WTC11 (cell line): ENCODE measurements at regions of chr6 and their contacts with region 1.

Region 1: GRCh38 chr6:35342258-35343091 is at the start of gene PPARD:
- DNase-seq: peak; percentile 99
- ATAC-seq: peak; percentile 97
- H3K4me3 Mint-ChIP-seq: peak within 1 kb of the TSS; percentile 86
- H3K27ac Mint-ChIP-seq: peak within 1 kb of the TSS; percentile 87
- H3K4me1 Mint-ChIP-seq: peaks cover 20% of the 10 kb centered on the region
- H3K27me3 Mint-ChIP-seq: peaks cover 8% of the 10 kb centered on the region
- CTCF ChIP-seq: peak; percentile 93
- total RNA-seq, gene PPARD: 14.7 to 17.1 TPM (median 16.8 TPM) in 3 replicates

Region 2: DNA sequence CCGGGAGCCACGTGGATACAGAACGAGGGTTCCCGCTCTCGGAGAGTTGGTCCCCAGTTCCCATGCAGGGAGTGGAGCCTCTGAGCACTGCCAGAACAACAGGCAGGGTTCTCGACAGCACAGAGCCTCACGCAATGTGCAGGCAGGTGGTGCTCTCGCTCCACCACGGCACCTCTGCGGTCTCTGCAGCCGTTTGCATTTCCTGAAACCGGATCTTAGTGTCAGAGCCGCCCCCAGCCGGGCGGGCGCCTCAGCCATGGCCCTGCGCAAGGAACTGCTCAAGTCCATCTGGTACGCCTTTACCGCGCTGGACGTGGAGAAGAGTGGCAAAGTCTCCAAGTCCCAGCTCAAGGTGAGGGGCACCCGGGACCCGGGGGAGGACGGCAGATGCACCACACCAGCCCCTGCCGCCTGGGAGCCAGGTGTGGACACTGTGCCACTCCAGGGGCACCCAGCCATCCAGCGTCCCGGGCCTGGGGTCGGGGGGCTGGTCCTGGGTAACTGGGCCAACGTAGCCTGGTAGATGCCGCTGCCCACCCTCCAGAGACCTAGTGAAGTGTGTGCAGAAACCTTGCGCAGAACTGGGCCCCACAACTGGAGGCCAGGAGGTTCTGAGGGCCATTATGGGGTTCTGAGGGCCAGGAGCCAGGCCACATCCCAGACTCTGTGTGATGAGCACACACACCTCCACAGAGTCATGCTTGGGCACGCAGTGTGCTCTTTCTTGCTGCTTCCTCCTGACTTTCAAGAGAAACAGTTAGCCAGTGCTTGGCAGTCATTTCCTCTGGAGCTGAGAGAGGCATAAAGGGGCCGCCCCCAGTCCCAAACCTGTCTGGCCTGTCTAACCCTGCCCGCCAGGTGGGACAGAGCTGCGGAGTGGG is 44.6 kb before region 1 on chr6 and contains the start of gene DEF6:
- CTCF ChIA-PET with region 1: interaction called, 35 read pairs
- POLR2A ChIA-PET with region 1: no interaction called
- DNase-seq: peak; percentile 90
- ATAC-seq: peak; percentile 94
- H3K4me3 Mint-ChIP-seq: peak within 1 kb of the TSS; percentile 46
- H3K27ac Mint-ChIP-seq: 0 out of 2 replicates have a peak within 1 kb of the TSS, but pooled peaks have one; percentile 41
- H3K4me1 Mint-ChIP-seq: peaks cover 35% of the 10 kb centered on the region
- H3K27me3 Mint-ChIP-seq: 0 out of 2 replicates have a peak, but pooled peaks cover 4% of the 10 kb centered on the region
- CTCF ChIP-seq: no peak; the same call in 1 of the 2 replicates
- total RNA-seq, gene DEF6: 11.3 to 12.8 TPM (median 11.4 TPM) in 3 replicates

Region 3: DNA sequence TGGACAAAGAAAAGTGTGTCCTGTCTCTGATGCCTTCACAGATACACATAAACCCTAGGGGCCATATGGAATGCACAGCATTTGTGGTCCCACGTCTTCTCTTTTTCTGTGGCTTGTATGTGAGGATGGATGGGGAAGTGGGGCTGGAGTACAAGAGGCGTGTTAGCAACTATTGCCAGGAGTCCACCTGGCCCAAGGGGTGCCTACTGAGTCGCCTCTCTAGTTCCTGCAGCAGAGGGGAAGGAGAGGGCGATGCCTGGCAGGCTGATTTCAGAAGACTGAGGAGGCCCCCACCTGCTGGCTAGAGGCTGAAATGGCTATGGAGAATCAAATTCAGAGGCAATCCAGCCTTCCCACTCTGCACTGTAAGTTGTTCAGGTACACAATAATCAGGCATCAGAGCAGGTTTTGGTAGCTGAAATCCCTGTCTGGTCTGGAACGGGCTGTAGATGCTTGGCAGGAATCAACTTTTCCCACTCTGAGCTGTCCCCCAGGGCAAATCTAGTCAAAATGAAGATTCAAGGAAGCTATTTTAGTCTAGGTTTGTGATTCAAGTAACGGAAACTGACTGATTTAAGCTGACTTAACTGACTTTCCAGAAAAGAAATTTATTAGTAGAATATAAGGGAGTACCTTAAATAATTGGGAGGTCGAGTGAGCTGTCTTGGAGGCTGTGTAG is 15.0 kb before region 1 on chr6:
- CTCF ChIA-PET with region 1: interaction called, 20 read pairs
- POLR2A ChIA-PET with region 1: no interaction called
- DNase-seq: peak; percentile 76
- ATAC-seq: peak; percentile 98
- H3K4me3 Mint-ChIP-seq: no peak overlapping the region
- H3K27ac Mint-ChIP-seq: no peak overlapping the region
- H3K4me1 Mint-ChIP-seq: peaks cover 9% of the 10 kb centered on the region
- H3K27me3 Mint-ChIP-seq: peaks cover 1% of the 10 kb centered on the region; the same call in 1 of the 2 replicates
- CTCF ChIP-seq: 0 out of 2 replicates have a peak, but pooled peaks have one; percentile 33

Region 4: GRCh38 chr6:35415065-35415991 is 72.9 kb after region 1 on chr6:
- CTCF ChIA-PET with region 1: interaction called, 73 read pairs
- POLR2A ChIA-PET with region 1: interaction called, 3 read pairs
- DNase-seq: peak; percentile 64
- ATAC-seq: peak; percentile 84
- H3K4me3 Mint-ChIP-seq: no peak overlapping the region
- H3K27ac Mint-ChIP-seq: peak overlapping the region; percentile 0; the same call in 1 of the 2 replicates
- H3K4me1 Mint-ChIP-seq: peaks cover 24% of the 10 kb centered on the region
- H3K27me3 Mint-ChIP-seq: no peaks in the 10 kb centered on the region
- CTCF ChIP-seq: no peak

Region 5: DNA sequence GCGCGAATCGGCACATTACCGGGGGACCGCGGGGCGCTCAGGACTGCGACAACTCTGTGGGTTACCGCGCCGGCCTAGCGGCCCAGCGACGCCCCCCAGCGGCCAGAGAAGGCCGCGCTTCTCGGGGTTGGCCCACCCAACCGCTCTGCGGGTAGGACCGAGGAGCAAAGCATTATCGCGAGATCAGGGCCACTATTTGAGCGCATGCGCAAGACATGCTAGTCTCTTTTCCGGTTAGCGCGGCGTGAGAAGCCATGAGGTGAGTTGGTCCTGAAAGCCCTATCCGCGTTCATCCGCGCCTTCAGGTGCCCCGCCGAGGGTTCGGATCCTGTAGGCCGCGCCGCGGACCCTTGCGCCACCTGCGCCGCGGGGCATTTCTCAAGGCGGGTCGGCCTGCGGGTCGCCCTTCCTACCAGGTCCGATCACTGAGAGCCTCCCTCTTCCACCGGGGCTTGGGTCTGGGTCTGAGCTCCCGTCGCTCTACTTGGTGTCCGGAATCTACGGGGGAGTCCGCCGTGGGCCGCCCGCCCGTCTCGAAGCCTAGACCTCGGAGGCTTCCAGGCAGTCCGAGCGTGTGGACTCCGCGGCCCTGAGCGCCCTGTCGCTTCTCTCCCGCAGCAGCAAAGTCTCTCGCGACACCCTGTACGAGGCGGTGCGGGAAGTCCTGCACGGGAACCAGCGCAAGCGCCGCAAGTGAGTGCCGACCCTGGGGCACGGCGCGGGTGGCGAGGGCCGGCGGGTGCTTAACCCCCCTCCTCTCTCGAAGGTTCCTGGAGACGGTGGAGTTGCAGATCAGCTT is 125.9 kb after region 1 on chr6 and contains the start of gene RPL10A:
- CTCF ChIA-PET with region 1: interaction called, 12 read pairs
- POLR2A ChIA-PET with region 1: interaction called, 3 read pairs
- DNase-seq: peak; percentile 95
- ATAC-seq: peak; percentile 71
- H3K4me3 Mint-ChIP-seq: peak within 1 kb of the TSS; percentile 95
- H3K27ac Mint-ChIP-seq: peak within 1 kb of the TSS; percentile 97
- H3K4me1 Mint-ChIP-seq: peaks cover 45% of the 10 kb centered on the region
- H3K27me3 Mint-ChIP-seq: peaks cover 13% of the 10 kb centered on the region
- CTCF ChIP-seq: peak; percentile 93
- total RNA-seq, gene RPL10A: 1,829 to 2,044 TPM (median 2,031 TPM) in 3 replicates